Ascending aorta (tissue), 2 donors: ENCODE measurements at regions of chr13 and their contacts with region 1.

Region 1: DNA sequence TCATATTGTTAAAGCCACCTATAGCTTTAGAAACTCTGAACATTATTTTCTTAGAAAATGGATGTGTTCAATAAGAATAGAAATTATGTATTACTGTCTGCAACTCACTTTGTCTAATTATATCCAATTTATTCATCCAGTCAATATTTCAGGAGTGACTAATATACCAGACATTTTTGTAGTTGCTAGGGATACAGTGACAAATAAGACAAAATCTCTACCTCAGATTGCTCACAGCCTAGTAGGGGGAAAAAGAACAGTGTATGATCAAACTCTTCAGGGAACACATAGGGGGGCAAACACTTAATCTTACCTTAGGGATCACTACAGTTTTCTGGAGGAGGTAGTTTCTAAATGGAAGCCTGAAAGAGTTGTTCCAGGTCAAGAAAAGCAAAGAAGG is 8.6 kb downstream of the BRCA2 start:
- DNase-seq: no peak
- H3K4me3 ChIP-seq: no peak overlapping the region
- H3K27ac ChIP-seq: peak overlapping the region in 1 of 2 donors; percentile 60
- H3K4me1 ChIP-seq: no peaks in the 10 kb centered on the region
- H3K27me3 ChIP-seq: no peaks in the 10 kb centered on the region
- CTCF ChIP-seq: no peak

Region 2: GRCh38 chr13:32427852-32428580 is 104.1 kb after region 1 on chr13 and contains the start of gene N4BP2L1:
- intact Hi-C with region 1: loop called (anchors 5 kb)
- DNase-seq: peak; percentile 76 to 92
- H3K4me3 ChIP-seq: peak within 1 kb of the TSS; percentile 86 to 99
- H3K27ac ChIP-seq: peak within 1 kb of the TSS; percentile 90 to 99
- H3K4me1 ChIP-seq: peaks cover 0 to 18% of the 10 kb centered on the region in 2 donors
- H3K27me3 ChIP-seq: no peaks in the 10 kb centered on the region
- CTCF ChIP-seq: no peak
- total RNA-seq, gene N4BP2L1: 27.2 TPM